ENCODE measurements at regions of chr6 and their contacts with region 1.

Region 1: DNA sequence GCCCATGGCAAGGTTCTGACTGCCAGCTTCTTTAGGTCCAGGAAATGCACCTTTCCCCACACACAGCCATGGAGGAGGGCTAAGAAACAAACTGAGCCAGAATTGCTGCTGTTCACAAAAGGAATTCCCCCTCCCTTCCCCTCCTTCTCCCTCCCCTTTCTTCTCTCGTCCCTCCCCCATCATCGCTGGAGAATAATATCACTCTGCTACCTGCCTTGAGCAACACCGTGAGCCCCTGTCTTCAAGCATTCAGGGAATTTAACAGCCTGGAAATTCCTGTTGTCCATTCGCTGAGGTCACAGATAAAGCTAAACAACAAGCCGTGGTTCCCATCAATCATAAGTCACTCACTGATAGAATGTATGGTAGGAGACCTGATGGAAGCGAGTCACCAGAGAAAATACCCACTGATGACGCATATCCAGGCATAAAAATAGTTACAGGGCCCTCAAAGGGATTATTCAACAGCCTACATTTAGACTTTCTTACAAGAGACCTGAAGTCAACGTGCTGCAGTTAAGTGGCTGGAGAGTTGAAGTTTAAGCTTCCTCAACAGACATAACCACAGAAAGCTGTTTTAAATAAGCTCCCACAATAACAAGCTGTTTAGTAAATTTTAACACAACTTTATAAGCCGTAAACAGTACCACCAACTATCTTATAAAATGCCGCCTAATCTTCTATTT is 59.7 kb downstream of the HIVEP2 start:
- DNase-seq: peak; percentile 82 to 99
- H3K4me3 ChIP-seq: peak overlapping the region; percentile 19; the same call in 1 of the 2 replicates
- H3K27ac ChIP-seq: peak overlapping the region; percentile 74
- H3K4me1 ChIP-seq: peaks cover 41% of the 10 kb centered on the region
- H3K27me3 ChIP-seq: no peaks in the 10 kb centered on the region
- CTCF ChIP-seq: no peak

Region 2: GRCh38 chr6:142692942-142693341 is 192.4 kb before region 1 on chr6:
- CTCF ChIA-PET with region 1: interaction called, 3 read pairs
- POLR2A ChIA-PET with region 1: no interaction called
- intact Hi-C with region 1: loop called (anchors 1 kb)
- DNase-seq: peak; percentile 37 to 58
- H3K4me3 ChIP-seq: no peak overlapping the region
- H3K27ac ChIP-seq: no peak overlapping the region
- H3K4me1 ChIP-seq: peaks cover 21% of the 10 kb centered on the region; the same call in 1 of the 2 replicates
- H3K27me3 ChIP-seq: no peaks in the 10 kb centered on the region
- CTCF ChIP-seq: peak; percentile 97

Region 3: DNA sequence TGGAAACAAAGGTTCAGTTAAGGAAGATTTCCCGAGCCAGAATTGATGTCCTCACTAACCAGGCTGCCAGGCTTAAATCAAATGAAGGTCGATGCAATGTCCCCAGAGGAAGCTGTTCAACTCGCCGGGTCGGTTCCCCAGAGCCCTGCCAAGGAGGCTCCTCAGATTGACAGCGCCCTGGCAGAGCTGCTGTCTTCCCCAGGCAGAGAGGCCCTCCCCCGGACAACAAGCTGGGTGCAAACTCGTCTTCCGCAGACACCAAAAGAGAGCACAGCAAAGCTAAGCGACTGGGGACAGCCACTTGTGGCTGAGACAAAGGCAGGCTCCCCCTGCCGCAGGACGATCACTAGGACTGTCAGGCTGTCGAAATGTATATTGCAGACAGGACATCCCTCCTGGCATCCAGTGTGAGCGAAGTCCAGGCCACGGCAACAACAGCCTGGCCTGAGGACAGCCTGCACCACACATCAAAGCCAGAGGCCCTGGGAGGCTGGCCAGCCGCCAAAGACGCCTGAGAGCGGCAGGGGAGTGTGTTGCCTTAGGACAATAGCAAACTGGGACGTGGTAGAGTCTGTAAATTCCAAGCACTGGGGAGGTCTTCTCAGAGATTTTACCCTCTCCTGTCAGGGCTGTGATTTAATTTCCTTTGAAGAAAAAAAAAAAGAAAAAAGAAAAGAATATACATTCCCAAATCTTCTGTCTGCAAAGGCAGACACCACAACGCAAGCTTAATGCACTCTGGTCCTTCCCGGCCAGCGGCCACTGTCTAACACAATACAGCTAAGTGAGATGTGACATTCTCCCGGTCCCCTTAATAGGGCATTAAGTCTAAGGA is 39.5 kb before region 1 on chr6:
- CTCF ChIA-PET with region 1: no interaction called
- POLR2A ChIA-PET with region 1: interaction called, 10 read pairs
- intact Hi-C with region 1: no loop called
- DNase-seq: peak; percentile 86
- H3K4me3 ChIP-seq: peak overlapping the region; percentile 51; the same call in 1 of the 2 replicates
- H3K27ac ChIP-seq: peak overlapping the region; percentile 89
- H3K4me1 ChIP-seq: peaks cover 84% of the 10 kb centered on the region
- H3K27me3 ChIP-seq: no peaks in the 10 kb centered on the region
- CTCF ChIP-seq: no peak

Region 4: GRCh38 chr6:142926494-142927270 is 41.4 kb after region 1 on chr6:
- CTCF ChIA-PET with region 1: no interaction called
- POLR2A ChIA-PET with region 1: no interaction called
- intact Hi-C with region 1: loop called (anchors 1 kb)
- DNase-seq: peak in 1 of 2 experiments; percentile 56
- H3K4me3 ChIP-seq: peak overlapping the region; percentile 49; the same call in 1 of the 2 replicates
- H3K27ac ChIP-seq: no peak overlapping the region
- H3K4me1 ChIP-seq: peaks cover 10% of the 10 kb centered on the region; the same call in 1 of the 2 replicates
- H3K27me3 ChIP-seq: no peaks in the 10 kb centered on the region
- CTCF ChIP-seq: no peak

Region 5: DNA sequence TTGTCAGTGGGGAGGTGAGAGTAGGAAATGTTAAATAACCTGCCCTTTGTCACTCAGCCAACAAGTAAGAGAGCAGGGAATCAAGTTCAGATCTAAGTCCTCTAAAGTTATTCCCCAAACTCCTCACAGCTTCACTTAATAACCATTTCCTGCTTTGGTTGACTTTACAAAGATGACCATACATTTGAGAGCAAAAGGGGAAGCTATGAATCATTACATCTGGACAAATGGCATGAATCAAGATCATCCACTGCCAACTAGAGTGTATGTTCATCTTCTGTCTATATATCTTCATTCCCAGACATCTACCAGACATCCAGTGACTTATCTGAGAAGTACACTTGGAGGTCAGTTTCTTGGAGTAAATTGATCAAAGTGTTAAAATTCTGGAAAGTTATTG is 74.8 kb after region 1 on chr6:
- CTCF ChIA-PET with region 1: no interaction called
- POLR2A ChIA-PET with region 1: no interaction called
- intact Hi-C with region 1: no loop called
- DNase-seq: no peak
- H3K4me3 ChIP-seq: no peak overlapping the region
- H3K27ac ChIP-seq: no peak overlapping the region
- H3K4me1 ChIP-seq: no peaks in the 10 kb centered on the region
- H3K27me3 ChIP-seq: no peaks in the 10 kb centered on the region
- CTCF ChIP-seq: no peak

Region 6: GRCh38 chr6:143060354-143060805 is 175.1 kb after region 1 on chr6:
- CTCF ChIA-PET with region 1: no interaction called
- POLR2A ChIA-PET with region 1: no interaction called
- intact Hi-C with region 1: loop called (anchors 1 kb)
- DNase-seq: peak; percentile 75 to 84
- H3K4me3 ChIP-seq: peak overlapping the region; percentile 66
- H3K27ac ChIP-seq: peak overlapping the region; percentile 97
- H3K4me1 ChIP-seq: peaks cover 51% of the 10 kb centered on the region
- H3K27me3 ChIP-seq: no peaks in the 10 kb centered on the region
- CTCF ChIP-seq: no peak; the same call in 1 of the 2 replicates